ENCODE measurements at regions of chr3 and their contacts with region 1.

Region 1: DNA sequence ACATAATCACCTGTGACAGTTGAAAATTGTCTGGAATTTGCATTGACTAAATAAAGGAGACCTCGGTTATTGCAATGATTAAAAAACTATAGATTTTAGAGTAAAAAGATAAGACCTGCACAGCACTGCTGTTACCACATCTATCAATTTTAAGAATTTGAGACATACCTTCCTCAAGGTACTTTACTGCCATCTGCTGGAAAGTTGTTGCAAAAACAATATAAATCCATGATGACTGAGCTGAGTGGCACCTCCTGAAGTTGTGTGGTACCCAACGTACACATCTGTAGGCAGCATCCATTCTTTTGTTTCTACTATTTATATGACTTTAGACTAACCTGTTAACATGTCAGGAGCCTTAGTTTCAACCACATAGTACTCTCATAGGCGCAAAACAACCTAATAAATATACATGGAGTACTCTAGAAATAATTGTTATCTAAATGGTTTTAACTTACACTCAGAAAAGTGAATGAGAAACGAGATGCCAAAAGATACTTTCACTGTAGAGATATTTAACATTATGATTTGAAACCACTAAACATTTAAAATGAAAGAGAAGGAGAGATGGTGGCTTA is 106.7 kb downstream of the GHSR start:
- DNase-seq: no peak
- H3K4me3 Mint-ChIP-seq: no peak overlapping the region
- H3K27ac Mint-ChIP-seq: no peak overlapping the region
- H3K4me1 Mint-ChIP-seq: no peaks in the 10 kb centered on the region
- H3K27me3 Mint-ChIP-seq: no peaks in the 10 kb centered on the region

Region 2: GRCh38 chr3:171162986-171163723 is 1178.4 kb before region 1 on chr3:
- CTCF ChIA-PET with region 1: interaction called, 3 read pairs
- POLR2A ChIA-PET with region 1: no interaction called
- intact Hi-C with region 1: loop called (anchors 10 kb)
- DNase-seq: no peak
- H3K4me3 Mint-ChIP-seq: no peak overlapping the region
- H3K27ac Mint-ChIP-seq: no peak overlapping the region
- H3K4me1 Mint-ChIP-seq: peaks cover 24% of the 10 kb centered on the region
- H3K27me3 Mint-ChIP-seq: no peaks in the 10 kb centered on the region

Region 3: DNA sequence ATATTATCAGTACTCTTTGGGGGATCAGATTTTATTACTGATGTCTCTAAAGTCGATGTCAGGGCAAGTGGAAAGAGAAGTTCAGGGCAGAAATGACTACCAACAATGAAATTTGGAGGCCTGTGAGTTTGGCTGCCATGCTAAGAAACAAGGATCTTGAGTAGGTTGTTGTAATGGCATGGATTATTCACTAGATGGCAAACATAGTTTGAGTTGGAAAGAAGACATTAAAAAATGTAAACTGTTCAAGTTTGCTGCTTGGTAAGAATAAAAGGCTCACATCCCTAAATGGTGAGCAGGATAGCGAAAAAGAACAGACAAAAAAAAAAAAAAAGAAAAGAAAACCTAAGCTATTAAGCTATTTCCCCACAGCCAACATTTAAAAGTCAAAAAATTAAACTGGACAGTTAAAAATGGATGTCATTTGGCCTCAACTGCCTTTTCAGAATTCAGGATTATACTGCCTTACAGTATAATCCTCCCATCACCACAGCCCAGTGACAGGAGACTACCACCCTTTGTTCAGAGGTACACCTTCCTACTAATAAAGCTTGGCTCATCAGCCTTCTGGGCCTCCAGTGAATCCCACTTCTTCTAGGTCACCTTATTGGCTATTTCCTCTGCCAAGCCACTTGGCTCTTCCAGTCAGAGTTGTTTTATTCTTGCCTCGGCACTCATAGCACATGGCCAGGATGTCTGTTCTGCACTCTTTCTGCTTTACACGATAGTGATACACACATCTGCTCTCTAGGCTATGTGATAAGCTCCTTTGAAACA is 695.0 kb before region 1 on chr3:
- CTCF ChIA-PET with region 1: interaction called, 6 read pairs
- POLR2A ChIA-PET with region 1: no interaction called
- intact Hi-C with region 1: loop called (anchors 10 kb)
- DNase-seq: no peak
- H3K4me3 Mint-ChIP-seq: no peak overlapping the region
- H3K27ac Mint-ChIP-seq: no peak overlapping the region
- H3K4me1 Mint-ChIP-seq: no peaks in the 10 kb centered on the region
- H3K27me3 Mint-ChIP-seq: no peaks in the 10 kb centered on the region

Region 4: GRCh38 chr3:171846597-171846996 is 495.0 kb before region 1 on chr3:
- CTCF ChIA-PET with region 1: no interaction called
- POLR2A ChIA-PET with region 1: no interaction called
- intact Hi-C with region 1: loop called (anchors 5 kb)
- DNase-seq: no peak
- H3K4me3 Mint-ChIP-seq: no peak overlapping the region
- H3K27ac Mint-ChIP-seq: no peak overlapping the region
- H3K4me1 Mint-ChIP-seq: peaks cover 7% of the 10 kb centered on the region
- H3K27me3 Mint-ChIP-seq: peaks cover 4% of the 10 kb centered on the region

Region 5: DNA sequence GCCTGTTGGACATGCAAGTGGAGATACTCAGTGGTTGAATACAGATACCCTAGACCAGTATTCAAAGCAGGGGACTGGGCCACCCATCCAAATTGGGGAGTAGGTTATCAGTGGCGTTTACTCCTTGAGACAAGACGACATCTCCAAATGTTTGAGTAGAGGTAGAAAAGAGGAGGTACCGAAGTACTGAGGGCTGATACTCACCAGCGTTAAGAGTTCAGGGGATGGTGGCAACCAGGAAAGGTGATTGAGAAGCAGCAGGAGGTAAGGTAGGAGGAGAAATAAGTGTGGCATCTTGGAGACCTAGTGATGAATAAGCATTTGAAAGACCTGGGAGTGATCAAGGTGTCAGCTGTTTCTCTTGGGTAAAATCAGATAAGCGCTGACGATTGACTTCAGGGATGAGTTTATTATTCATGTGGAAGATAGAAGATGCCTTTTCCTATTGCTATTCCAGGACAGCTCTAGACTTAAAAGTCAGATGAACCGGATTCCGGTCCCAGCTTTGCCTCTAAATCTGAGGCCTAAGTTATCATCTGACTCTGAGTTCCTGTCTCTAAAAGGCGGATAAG is 10.4 kb after region 1 on chr3:
- CTCF ChIA-PET with region 1: interaction called, 14 read pairs
- POLR2A ChIA-PET with region 1: no interaction called
- intact Hi-C with region 1: no loop called
- DNase-seq: no peak
- H3K4me3 Mint-ChIP-seq: no peak overlapping the region
- H3K27ac Mint-ChIP-seq: no peak overlapping the region
- H3K4me1 Mint-ChIP-seq: no peaks in the 10 kb centered on the region
- H3K27me3 Mint-ChIP-seq: no peaks in the 10 kb centered on the region

Region 6: DNA sequence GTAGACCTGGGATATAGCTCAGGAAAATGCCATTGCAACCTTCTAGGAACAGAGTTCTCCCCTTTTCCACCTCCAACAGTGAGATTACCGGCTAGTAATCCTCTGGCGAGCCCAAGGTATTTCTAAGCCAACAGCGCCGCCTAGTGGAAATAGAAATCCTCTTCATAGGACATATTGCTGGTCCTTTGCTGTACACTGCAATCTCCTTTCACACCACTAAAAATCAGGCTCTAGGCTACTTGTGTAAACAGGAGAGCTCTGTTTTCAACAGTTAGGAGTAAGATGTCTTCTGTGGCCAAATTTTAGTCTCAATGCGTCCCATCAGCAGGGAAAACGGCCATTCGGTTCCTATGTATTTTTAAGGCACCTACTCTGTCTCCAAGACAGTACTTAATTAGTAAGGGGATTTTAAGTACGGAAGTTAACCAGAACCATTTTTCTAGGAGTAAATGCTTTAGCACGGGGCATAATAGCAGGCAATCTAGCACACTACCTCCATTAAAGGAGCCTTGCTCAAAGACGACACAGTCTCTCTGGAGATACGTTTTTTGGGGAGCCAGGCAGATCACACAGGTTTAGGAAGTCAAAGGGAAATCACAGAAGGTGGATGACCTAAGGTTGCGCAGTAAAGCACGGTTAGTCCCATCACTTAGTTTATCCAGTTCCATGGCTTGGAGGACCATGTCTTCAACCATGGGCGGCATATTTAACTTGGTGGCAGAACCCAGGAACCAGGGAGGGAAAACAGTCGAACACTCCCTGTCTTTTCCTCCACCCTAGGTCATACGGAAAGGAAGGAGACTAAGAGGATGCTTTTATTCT is 325.5 kb after region 1 on chr3:
- CTCF ChIA-PET with region 1: interaction called, 37 read pairs
- POLR2A ChIA-PET with region 1: no interaction called
- intact Hi-C with region 1: no loop called
- DNase-seq: peak; percentile 82
- H3K4me3 Mint-ChIP-seq: no peak overlapping the region
- H3K27ac Mint-ChIP-seq: no peak overlapping the region
- H3K4me1 Mint-ChIP-seq: peaks cover 14% of the 10 kb centered on the region
- H3K27me3 Mint-ChIP-seq: no peaks in the 10 kb centered on the region

Measured in activated CD4-positive, alpha-beta memory T cell treated with anti-CD3 and anti-CD28 coated beads for 36 hours (primary cell).